Activated CD4-positive, alpha-beta memory T cell treated with anti-CD3 and anti-CD28 coated beads for 36 hours (primary cell): ENCODE measurements at regions of chr10 and their contacts with region 1.

Region 1: GRCh38 chr10:71597821-71598498 is 121.6 kb downstream of the C10orf105 start:
- DNase-seq: no peak
- H3K4me3 Mint-ChIP-seq: no peak overlapping the region
- H3K27ac Mint-ChIP-seq: no peak overlapping the region
- H3K4me1 Mint-ChIP-seq: peaks cover 9% of the 10 kb centered on the region
- H3K27me3 Mint-ChIP-seq: no peaks in the 10 kb centered on the region

Region 2: DNA sequence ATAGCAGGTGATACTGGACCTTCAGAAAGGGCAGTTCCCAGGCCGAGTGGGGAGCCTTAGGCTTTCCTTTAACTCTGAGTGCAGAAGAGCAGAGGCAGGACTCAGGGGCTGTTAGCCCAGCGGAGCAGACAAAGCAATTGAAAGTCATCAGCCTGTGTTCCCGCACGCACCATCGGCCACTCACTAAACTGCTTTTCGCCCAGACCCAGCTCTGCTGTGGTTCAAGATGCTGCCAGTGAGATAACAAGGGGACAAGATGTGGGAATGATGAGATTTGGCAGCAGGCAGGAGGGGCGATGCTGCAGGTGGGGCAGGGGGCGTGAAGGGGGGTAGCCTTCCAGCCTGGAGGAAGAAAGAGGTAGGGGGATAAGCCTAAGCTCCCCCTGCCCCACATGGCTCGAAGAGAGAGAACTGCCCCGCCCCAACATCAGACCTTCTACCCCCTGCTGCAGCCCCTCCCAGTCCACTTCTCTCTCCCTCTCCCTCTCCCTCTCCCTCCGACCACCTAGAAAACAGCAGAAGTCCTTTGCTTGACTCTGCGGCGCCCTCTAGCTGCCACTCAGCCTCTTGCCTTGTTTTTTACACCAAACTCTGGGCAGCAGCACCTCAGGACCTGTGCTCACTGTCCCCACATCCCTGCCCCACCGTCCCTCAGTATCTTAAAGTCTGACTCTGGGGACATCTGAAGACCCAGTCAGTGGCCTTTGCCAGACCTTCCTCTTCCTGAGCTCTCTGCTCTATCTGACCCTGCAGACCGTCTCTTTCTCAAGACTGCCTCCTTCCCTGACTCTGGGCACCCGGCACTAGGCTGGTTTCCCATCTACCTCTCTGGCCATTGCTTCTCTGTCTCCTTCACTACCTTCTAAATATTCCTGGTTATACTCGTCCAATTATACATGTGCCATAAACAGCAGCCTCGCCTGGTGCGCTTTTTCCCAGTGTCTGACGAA is 11.1 kb after region 1 on chr10:
- CTCF ChIA-PET with region 1: interaction called, 13 read pairs
- POLR2A ChIA-PET with region 1: no interaction called
- intact Hi-C with region 1: no loop called
- DNase-seq: peak; percentile 78
- H3K4me3 Mint-ChIP-seq: no peak overlapping the region
- H3K27ac Mint-ChIP-seq: no peak overlapping the region
- H3K4me1 Mint-ChIP-seq: no peaks in the 10 kb centered on the region
- H3K27me3 Mint-ChIP-seq: peaks cover 1% of the 10 kb centered on the region